ENCODE measurements at regions of chr6 and their contacts with region 1.

Region 1: DNA sequence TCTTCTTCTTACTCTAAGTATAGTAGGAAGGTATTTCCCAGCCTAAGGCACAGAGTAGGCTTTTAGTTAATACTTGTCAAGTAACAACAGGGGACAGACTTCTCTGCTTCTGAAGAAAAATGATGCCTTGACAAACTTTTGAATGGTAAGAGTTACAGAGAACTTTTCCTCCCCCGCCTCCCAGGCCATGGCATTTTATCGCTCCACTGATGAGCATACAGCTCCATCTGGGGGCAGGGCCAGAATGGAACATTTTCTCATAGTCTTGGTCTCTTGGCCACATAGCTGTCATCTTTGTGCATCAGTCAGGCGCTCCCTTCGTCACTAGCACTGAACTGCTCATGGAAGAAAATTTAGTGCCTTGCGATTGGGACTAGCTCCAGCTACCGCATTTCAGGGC is 1066.8 kb upstream of the CITED2 start:
- DNase-seq: peak; percentile 40
- H3K4me3 Mint-ChIP-seq: no peak overlapping the region
- H3K27ac Mint-ChIP-seq: no peak overlapping the region
- H3K4me1 Mint-ChIP-seq: peaks cover 19% of the 10 kb centered on the region
- H3K27me3 Mint-ChIP-seq: no peaks in the 10 kb centered on the region
- CTCF ChIP-seq: peak; percentile 45

Region 2: GRCh38 chr6:139369568-139370282 is 1071.5 kb before region 1 on chr6:
- CTCF ChIA-PET with region 1: interaction called, 12 read pairs
- POLR2A ChIA-PET with region 1: interaction called, 23 read pairs
- intact Hi-C with region 1: loop called (anchors 1 kb)
- DNase-seq: peak; percentile 51
- H3K4me3 Mint-ChIP-seq: peak overlapping the region; percentile 97
- H3K27ac Mint-ChIP-seq: peak overlapping the region; percentile 42
- H3K4me1 Mint-ChIP-seq: peaks cover 20% of the 10 kb centered on the region
- H3K27me3 Mint-ChIP-seq: no peaks in the 10 kb centered on the region
- CTCF ChIP-seq: peak; percentile 68

Region 3: DNA sequence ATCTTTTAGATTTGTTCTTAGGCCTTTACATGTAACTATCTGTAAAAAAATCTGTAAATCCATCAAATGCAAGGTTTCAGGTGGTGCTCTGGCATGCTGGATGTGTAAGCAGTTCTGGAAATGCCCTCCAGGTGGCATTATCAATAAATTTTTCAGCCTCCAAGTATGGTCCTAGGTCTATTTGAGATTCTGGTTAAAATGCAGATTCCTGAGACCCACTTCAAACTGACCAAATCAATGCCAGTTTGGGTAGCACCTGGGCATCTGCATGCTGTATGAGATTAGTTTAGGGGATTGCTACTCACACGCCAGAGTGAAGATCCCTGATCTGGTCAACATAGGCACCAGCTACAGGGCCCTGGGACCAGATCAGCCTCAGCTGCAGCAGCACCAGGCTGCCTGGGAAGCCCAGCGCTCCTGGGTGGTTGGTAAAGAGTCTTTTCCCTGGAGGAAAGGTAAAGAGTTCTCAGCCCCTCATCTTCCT is 559.5 kb before region 1 on chr6:
- CTCF ChIA-PET with region 1: interaction called, 6 read pairs
- POLR2A ChIA-PET with region 1: no interaction called
- intact Hi-C with region 1: loop called (anchors 1 kb)
- DNase-seq: peak; percentile 51
- H3K4me3 Mint-ChIP-seq: no peak overlapping the region
- H3K27ac Mint-ChIP-seq: no peak overlapping the region
- H3K4me1 Mint-ChIP-seq: peaks cover 5% of the 10 kb centered on the region
- H3K27me3 Mint-ChIP-seq: no peaks in the 10 kb centered on the region
- CTCF ChIP-seq: peak; percentile 46

Region 4: GRCh38 chr6:140052756-140053729 is 388.2 kb before region 1 on chr6:
- CTCF ChIA-PET with region 1: no interaction called
- POLR2A ChIA-PET with region 1: no interaction called
- intact Hi-C with region 1: loop called (anchors 5 kb)
- DNase-seq: no peak
- H3K4me3 Mint-ChIP-seq: no peak overlapping the region
- H3K27ac Mint-ChIP-seq: peak overlapping the region; percentile 74
- H3K4me1 Mint-ChIP-seq: peaks cover 22% of the 10 kb centered on the region
- H3K27me3 Mint-ChIP-seq: no peaks in the 10 kb centered on the region
- CTCF ChIP-seq: peak; percentile 10

Region 5: GRCh38 chr6:140566781-140567231 is 125.5 kb after region 1 on chr6:
- CTCF ChIA-PET with region 1: no interaction called
- POLR2A ChIA-PET with region 1: no interaction called
- intact Hi-C with region 1: no loop called
- DNase-seq: peak; percentile 71
- H3K4me3 Mint-ChIP-seq: no peak overlapping the region
- H3K27ac Mint-ChIP-seq: no peak overlapping the region
- H3K4me1 Mint-ChIP-seq: peaks cover 16% of the 10 kb centered on the region
- H3K27me3 Mint-ChIP-seq: no peaks in the 10 kb centered on the region
- CTCF ChIP-seq: no peak

Measured in MCF 10A (cell line).